GM10248 (cell line): ENCODE measurements at regions of chr4 and their contacts with region 1.

Region 1: DNA sequence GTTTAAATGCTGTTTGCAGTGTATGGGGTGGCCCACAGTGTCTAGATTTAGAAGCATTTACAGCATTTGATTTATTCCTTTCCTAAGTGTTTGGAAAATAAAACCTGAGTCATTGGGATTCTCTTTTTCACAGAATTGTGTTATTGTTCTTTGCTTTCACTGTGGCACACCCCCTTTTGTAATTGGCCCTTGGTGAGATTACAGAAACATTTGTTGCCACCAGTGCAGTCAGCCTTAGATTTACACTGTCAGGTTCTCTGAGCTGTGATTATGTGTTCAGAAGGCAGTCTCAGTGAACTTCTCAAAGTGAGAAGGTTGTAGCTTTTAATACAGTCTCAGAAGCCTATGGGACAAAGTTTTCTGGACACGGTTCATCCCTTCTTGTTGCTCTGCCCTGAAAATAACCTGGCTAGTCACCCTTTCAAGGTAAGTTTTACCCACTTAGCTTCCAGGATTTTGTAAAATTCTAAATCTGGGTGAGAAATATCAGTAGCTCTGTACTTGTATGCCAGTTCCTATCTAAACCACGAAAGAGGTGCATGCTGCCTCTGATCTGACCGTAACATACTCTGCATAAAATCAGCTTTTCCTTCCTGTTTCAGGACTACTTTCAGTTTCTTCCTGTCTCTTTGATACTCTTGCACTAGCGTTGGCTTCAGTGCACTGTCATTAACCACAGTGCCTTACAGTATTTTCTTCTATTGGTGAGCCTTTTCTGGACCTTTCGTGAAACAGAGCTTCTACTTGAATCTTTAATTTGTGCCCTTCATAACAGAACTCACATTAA is 12.6 kb downstream of the RUFY3 start:
- DNase-seq: peak; percentile 70
- CTCF ChIP-seq: no peak

Region 2: DNA sequence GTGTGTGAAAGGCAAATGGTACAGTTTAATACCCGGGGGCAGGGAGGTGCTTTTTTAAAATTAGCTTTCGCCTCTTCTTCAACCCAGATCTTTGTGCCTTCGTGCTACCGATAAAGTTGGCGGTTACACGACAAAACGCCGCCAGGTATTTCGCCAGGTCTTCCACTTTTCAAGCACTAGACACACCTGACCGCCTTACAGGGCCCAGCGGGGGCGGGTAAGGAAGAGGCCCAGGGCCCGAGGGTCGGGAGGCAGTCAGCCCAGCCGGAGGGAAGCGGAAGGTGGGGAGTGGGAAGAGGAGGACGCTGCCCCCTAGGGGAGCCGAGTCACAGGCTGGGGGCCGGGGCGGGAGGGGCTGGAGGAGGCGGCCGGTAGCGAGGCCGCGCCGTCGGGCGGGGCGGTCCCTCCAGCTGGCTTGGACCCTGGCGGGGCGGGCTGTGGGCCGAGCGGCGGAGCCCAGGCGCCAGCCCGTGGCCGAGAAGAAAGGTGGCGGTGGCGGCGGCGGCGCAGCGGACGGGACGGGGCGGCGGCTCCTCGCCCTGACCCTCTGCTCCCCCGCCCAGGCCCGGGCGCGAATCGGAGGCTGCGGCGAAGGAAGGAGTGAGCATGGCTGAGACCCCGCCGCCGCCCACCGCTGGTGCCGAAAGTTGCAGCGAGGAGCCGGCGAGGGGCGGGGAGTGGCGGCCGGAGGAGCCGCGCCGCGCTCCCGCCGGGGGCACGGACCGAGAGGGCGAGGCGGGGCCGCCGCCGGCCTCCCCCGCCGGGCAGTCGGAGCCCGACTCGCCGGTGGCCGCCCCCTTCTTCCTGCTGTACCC is 29.8 kb before region 1 on chr4:
- CTCF ChIA-PET with region 1: interaction called, 21 read pairs
- POLR2A ChIA-PET with region 1: no interaction called
- DNase-seq: peak; percentile 84
- CTCF ChIP-seq: peak; percentile 25

Region 3: GRCh38 chr4:70721747-70722146 is 12.6 kb before region 1 on chr4 and contains the start of gene RUFY3:
- CTCF ChIA-PET with region 1: interaction called, 40 read pairs
- POLR2A ChIA-PET with region 1: no interaction called
- DNase-seq: no peak
- CTCF ChIP-seq: no peak

Region 4: GRCh38 chr4:70749313-70749712 is 15.0 kb after region 1 on chr4:
- CTCF ChIA-PET with region 1: interaction called, 15 read pairs
- POLR2A ChIA-PET with region 1: no interaction called
- DNase-seq: peak; percentile 28
- CTCF ChIP-seq: no peak

Region 5: GRCh38 chr4:70754470-70754869 is 20.1 kb after region 1 on chr4:
- CTCF ChIA-PET with region 1: interaction called, 13 read pairs
- POLR2A ChIA-PET with region 1: no interaction called
- DNase-seq: peak; percentile 45
- CTCF ChIP-seq: no peak